Endothelial cell of umbilical vein (primary cell): ENCODE measurements at regions of chr15 and their contacts with region 1.

Region 1: GRCh38 chr15:96330450-96331145 is at the start of gene NR2F2:
- DNase-seq: peak; percentile 98
- H3K4me3 ChIP-seq: peak within 1 kb of the TSS; percentile 92 to 99 (median 99)
- H3K27ac ChIP-seq: peak within 1 kb of the TSS; percentile 92
- H3K4me1 ChIP-seq: peaks cover 22% of the 10 kb centered on the region
- H3K27me3 ChIP-seq: no peaks in the 10 kb centered on the region
- CTCF ChIP-seq: no peak
- POLR2A ChIP-seq: peak; percentile 99
- total RNA-seq, gene NR2F2: 153 and 182 TPM in 2 replicates

Region 2: DNA sequence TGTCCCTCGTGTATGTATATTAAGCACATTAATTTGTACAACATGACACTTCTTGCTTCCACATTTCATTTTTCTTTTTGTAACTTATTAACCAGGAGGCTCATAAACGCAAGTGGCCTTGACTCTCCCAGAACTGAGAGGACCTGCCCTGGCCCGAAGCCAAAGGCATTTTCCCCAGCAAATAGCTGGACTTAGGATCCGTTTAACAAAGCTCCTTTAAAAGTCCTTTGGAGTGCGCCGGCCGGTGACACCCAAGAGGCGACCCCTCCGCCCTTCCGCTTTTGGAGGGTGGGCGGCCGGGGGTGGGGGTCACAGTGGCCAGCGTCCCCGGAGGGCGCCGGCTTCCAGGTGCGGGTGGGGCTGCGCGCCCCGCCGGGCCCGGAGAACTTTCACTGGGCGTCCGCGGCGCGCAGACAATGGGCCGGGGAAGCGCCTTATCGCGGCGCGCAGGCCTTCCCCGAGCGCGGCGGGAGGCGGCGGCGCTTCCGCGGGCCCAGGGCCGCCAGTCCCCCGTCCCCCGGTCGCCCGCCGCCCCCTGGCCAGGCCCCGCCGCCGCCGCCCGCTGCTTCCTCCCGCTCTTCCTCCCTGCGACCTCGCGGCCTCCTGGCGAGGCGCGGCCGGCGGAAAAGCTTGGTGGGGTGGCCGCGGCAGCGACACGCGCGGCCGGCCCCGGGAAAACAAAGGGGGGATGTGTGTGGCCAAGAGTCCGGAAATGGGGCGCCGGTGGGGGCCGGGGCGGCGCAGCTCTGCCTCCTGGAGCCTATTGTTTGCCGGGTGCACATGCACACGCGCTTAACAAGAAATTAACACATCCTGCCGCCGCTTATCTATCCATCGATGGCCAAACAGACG is 1485.8 kb before region 1 on chr15:
- CTCF ChIA-PET with region 1: no interaction called
- POLR2A ChIA-PET with region 1: interaction called, 7 read pairs
- dilution Hi-C with region 1: no loop called
- intact Hi-C with region 1: loop called (anchors 5 kb)
- DNase-seq: peak; percentile 98
- H3K4me3 ChIP-seq: peak overlapping the region in 1 of 3 experiments; percentile 31
- H3K27ac ChIP-seq: peak overlapping the region; percentile 100
- H3K4me1 ChIP-seq: peaks cover 60% of the 10 kb centered on the region
- H3K27me3 ChIP-seq: no peaks in the 10 kb centered on the region
- CTCF ChIP-seq: peak in 1 of 2 donors; percentile 36
- POLR2A ChIP-seq: peak; percentile 62

Region 3: GRCh38 chr15:95304151-95304946 is 1026.2 kb before region 1 on chr15:
- CTCF ChIA-PET with region 1: interaction called, 20 read pairs
- POLR2A ChIA-PET with region 1: interaction called, 11 read pairs
- dilution Hi-C with region 1: loop called (anchors 25 kb)
- intact Hi-C with region 1: loop called (anchors 1 kb)
- DNase-seq: peak; percentile 98
- H3K4me3 ChIP-seq: no peak overlapping the region
- H3K27ac ChIP-seq: peak overlapping the region; percentile 97
- H3K4me1 ChIP-seq: peaks cover 52% of the 10 kb centered on the region
- H3K27me3 ChIP-seq: no peaks in the 10 kb centered on the region
- CTCF ChIP-seq: no peak
- POLR2A ChIP-seq: no peak

Region 4: GRCh38 chr15:95604634-95605036 is 726.0 kb before region 1 on chr15:
- CTCF ChIA-PET with region 1: no interaction called
- POLR2A ChIA-PET with region 1: no interaction called
- dilution Hi-C with region 1: no loop called
- intact Hi-C with region 1: loop called (anchors 5 kb)
- DNase-seq: peak; percentile 95
- H3K4me3 ChIP-seq: no peak overlapping the region
- H3K27ac ChIP-seq: peak overlapping the region; percentile 50
- H3K4me1 ChIP-seq: peaks cover 33% of the 10 kb centered on the region
- H3K27me3 ChIP-seq: no peaks in the 10 kb centered on the region
- CTCF ChIP-seq: no peak
- POLR2A ChIP-seq: no peak

Region 5: GRCh38 chr15:95932676-95933075 is 397.9 kb before region 1 on chr15:
- CTCF ChIA-PET with region 1: interaction called, 3 read pairs
- POLR2A ChIA-PET with region 1: no interaction called
- dilution Hi-C with region 1: no loop called
- intact Hi-C with region 1: loop called (anchors 2 kb)
- DNase-seq: peak; percentile 83
- H3K4me3 ChIP-seq: no peak overlapping the region
- H3K27ac ChIP-seq: peak overlapping the region; percentile 17
- H3K4me1 ChIP-seq: peaks cover 14% of the 10 kb centered on the region
- H3K27me3 ChIP-seq: no peaks in the 10 kb centered on the region
- CTCF ChIP-seq: no peak
- POLR2A ChIP-seq: peak; percentile 44

Region 6: GRCh38 chr15:96356494-96357455 is 26.2 kb after region 1 on chr15:
- CTCF ChIA-PET with region 1: interaction called, 34 read pairs
- POLR2A ChIA-PET with region 1: interaction called, 5 read pairs
- dilution Hi-C with region 1: no loop called
- intact Hi-C with region 1: no loop called
- DNase-seq: peak; percentile 88
- H3K4me3 ChIP-seq: peak overlapping the region; percentile 46 to 81 (median 65)
- H3K27ac ChIP-seq: peak overlapping the region; percentile 76
- H3K4me1 ChIP-seq: peaks cover 71% of the 10 kb centered on the region
- H3K27me3 ChIP-seq: no peaks in the 10 kb centered on the region
- CTCF ChIP-seq: peak; percentile 94 to 98
- POLR2A ChIP-seq: no peak

Region 7: GRCh38 chr15:96409215-96410138 is 78.9 kb after region 1 on chr15:
- CTCF ChIA-PET with region 1: no interaction called
- POLR2A ChIA-PET with region 1: no interaction called
- dilution Hi-C with region 1: no loop called
- intact Hi-C with region 1: no loop called
- DNase-seq: peak; percentile 26
- H3K4me3 ChIP-seq: peak overlapping the region; percentile 12 to 49 (median 49)
- H3K27ac ChIP-seq: no peak overlapping the region
- H3K4me1 ChIP-seq: peaks cover 8% of the 10 kb centered on the region
- H3K27me3 ChIP-seq: peaks cover 25 to 49% of the 10 kb centered on the region in 2 experiments
- CTCF ChIP-seq: no peak
- POLR2A ChIP-seq: no peak